Left cardiac atrium (tissue), 4 donors: ENCODE measurements at regions of chr13 and their contacts with region 1.

Region 1: DNA sequence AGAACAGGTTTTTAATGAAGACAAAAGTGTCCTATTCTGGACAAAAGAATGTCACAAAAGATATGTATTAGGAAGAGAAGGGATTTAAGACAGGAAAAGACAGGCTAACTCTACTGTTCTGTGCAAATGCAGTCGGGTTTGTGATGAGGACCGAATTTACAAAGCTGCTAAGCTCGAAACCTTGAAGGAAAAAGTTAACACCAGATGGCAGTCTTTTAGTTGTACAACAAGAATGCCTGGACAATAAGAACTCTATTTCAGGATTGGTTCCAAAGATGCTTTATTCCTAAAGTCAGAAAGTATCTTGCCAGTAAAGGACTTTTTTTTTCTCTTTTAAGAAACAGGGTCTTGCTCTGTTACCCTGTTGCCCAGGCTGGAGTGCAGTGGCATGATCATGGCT is 51.1 kb downstream of the HS6ST3 start:
- DNase-seq: no peak
- ATAC-seq: no peak

Region 2: DNA sequence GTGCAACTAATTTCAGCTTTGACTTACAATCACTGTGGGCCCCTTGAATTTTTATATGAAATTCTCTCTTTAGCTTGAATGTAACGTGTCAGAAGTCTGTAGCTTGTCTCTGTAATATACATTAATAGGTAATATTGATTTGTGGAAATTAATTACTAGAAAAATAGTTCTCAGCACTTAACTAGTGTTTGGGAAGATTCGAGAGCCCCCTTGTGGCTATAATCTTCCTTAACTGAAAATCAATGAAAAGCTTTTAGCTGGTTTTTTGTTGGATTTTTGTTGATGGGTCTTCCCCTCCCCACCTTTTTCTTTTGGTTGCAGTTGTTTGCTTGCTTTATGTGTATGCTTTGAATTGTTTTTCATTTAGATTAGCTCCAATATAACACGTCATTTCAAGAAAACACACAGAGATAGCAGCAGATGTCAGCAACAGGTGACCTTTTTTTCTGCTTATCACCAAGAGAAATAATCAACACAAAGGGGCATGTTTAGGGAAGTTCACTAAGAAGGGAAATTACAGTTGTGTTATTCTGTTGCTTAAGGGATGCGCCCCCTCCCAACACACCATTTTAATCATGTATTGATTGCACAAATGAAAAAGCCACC is 676.4 kb after region 1 on chr13:
- intact Hi-C with region 1: loop called (anchors 10 kb)
- DNase-seq: no peak
- ATAC-seq: no peak